ENCODE measurements at regions of chr1 and their contacts with region 1.

Region 1: GRCh38 chr1:234997201-234997895 is 131.3 kb downstream of the TOMM20 start:
- DNase-seq: peak; percentile 99 to 100
- H3K4me3 ChIP-seq: peak overlapping the region; percentile 45
- H3K27ac ChIP-seq: peak overlapping the region; percentile 100
- H3K4me1 ChIP-seq: peaks cover 34% of the 10 kb centered on the region
- H3K27me3 ChIP-seq: no peaks in the 10 kb centered on the region
- CTCF ChIP-seq: no peak

Region 2: GRCh38 chr1:234912548-234913277 is 84.6 kb before region 1 on chr1:
- CTCF ChIA-PET with region 1: no interaction called
- POLR2A ChIA-PET with region 1: no interaction called
- intact Hi-C with region 1: loop called (anchors 1 kb)
- DNase-seq: peak in 1 of 2 experiments; percentile 89
- H3K4me3 ChIP-seq: no peak overlapping the region
- H3K27ac ChIP-seq: no peak overlapping the region
- H3K4me1 ChIP-seq: no peaks in the 10 kb centered on the region
- H3K27me3 ChIP-seq: no peaks in the 10 kb centered on the region
- CTCF ChIP-seq: no peak

Region 3: DNA sequence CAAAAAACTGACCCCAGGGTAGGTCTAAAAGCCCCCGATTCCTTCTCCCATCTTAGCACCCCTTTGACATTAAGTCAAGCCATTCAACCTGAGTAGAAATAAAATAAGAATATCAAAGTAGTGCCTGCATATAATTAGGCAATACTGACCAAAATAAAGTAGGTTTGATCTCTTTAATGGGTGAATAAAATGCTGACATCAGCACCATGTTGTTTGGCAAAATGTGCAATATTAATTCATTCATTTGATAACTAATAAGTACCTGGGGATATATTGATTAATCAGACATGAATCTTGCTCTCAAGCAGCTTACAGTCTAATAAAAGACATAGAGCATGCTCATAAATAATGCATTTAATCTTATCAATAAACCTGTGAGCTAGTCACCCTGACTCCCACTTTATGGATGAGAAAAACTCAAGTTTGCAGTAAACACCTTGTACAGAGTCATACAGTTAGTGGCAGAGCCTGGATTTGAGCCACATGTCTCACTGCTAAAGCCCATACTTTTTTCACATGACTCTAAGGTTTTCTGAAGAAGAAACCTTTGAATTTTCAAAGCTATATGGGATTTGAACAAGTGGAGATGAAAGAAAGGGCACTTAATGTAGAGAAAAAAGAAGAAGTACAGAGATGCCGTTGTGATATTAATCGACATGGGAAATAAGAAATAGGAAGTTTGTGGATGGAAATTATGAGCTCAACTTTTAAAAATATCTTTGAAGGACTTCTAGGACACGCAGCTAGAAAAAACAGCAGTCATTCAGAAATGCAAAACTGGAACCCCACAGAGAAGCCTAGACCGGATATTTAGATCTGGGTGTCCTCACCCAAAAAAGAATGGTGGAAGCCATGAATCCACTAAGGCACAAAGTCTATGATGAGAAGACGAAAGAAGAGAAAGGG is 52.7 kb before region 1 on chr1:
- CTCF ChIA-PET with region 1: no interaction called
- POLR2A ChIA-PET with region 1: no interaction called
- intact Hi-C with region 1: no loop called
- DNase-seq: no peak
- H3K4me3 ChIP-seq: no peak overlapping the region
- H3K27ac ChIP-seq: no peak overlapping the region
- H3K4me1 ChIP-seq: no peaks in the 10 kb centered on the region
- H3K27me3 ChIP-seq: no peaks in the 10 kb centered on the region
- CTCF ChIP-seq: no peak

Region 4: DNA sequence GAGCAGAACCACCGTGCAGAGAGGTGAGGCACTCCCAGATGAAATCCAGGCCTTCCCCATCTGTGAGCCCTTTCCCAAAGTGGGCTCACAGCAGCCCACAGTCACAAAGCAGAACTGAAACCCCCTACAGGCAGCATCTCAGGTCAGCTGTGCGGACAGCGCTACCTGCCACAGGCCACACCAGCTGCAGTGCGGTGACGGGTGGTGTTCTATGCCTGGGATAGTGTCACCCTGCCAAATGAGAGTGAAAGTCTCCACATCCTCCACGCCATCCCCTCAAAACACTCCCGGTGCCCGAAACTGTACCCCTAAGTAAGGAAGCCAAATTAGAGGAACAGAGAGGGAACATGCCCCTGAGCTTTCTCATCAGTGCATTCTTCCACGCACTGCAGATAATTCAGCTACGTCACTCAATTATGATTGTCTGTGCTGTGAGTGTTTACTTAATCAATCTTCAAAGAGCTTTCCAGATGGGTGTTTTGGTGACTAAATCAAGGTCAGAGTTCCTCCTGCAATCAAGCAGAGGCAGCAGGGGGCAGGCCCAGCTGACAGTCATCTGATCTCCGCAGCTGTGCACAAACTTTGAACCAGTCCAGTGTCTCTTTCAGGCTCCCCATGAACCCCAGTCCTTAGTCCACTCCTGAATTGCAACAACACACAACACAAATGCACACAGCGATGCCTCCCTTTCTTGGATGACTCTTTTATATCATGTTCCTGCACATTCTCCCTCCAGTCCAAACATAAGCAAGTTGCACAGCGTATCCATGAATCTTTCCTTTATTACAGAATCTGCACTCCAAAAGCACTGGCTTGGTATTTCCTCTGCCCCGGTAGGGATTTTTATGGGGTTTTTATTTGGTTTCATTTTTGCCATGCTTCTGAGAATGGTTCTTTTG is 18.7 kb before region 1 on chr1:
- CTCF ChIA-PET with region 1: no interaction called
- POLR2A ChIA-PET with region 1: interaction called, 3 read pairs
- intact Hi-C with region 1: loop called (anchors 1 kb)
- DNase-seq: peak; percentile 45 to 93
- H3K4me3 ChIP-seq: peak overlapping the region; percentile 30; the same call in 1 of the 2 replicates
- H3K27ac ChIP-seq: peak overlapping the region; percentile 99
- H3K4me1 ChIP-seq: peaks cover 99% of the 10 kb centered on the region
- H3K27me3 ChIP-seq: no peaks in the 10 kb centered on the region
- CTCF ChIP-seq: no peak